CD8-positive, alpha-beta T cell (primary cell): ENCODE measurements at regions of chr19 and their contacts with region 1.

Region 1: GRCh38 chr19:12333162-12334159 is at the start of gene ZNF563:
- DNase-seq: peak; percentile 94 to 98 (median 97)
- ATAC-seq: peak; percentile 94
- H3K4me3 ChIP-seq: peak within 1 kb of the TSS; percentile 81 to 86
- H3K4me3 Mint-ChIP-seq: peak within 1 kb of the TSS; percentile 96
- H3K27ac ChIP-seq: peak within 1 kb of the TSS; percentile 81 to 83
- H3K27ac Mint-ChIP-seq: peak within 1 kb of the TSS; percentile 99
- H3K4me1 ChIP-seq: peaks cover 35% of the 10 kb centered on the region
- H3K4me1 Mint-ChIP-seq: peaks cover 41% of the 10 kb centered on the region
- H3K27me3 ChIP-seq: no peaks in the 10 kb centered on the region
- H3K27me3 Mint-ChIP-seq: no peaks in the 10 kb centered on the region
- CTCF ChIP-seq: no peak
- total RNA-seq, gene ZNF563: 2.2 to 2.5 TPM

Region 2: GRCh38 chr19:11090054-11090900 is 1243.2 kb before region 1 on chr19:
- CTCF ChIA-PET with region 1: no interaction called
- POLR2A ChIA-PET with region 1: no interaction called
- intact Hi-C with region 1: loop called in 1 of 2 experiments (anchors 5 kb)
- DNase-seq: peak; percentile 95 to 98 (median 98)
- ATAC-seq: peak; percentile 84
- H3K4me3 ChIP-seq: peak overlapping the region; percentile 78 to 93
- H3K4me3 Mint-ChIP-seq: peak overlapping the region; percentile 86
- H3K27ac ChIP-seq: peak overlapping the region; percentile 97 to 99
- H3K27ac Mint-ChIP-seq: peak overlapping the region; percentile 96
- H3K4me1 ChIP-seq: peaks cover 44% of the 10 kb centered on the region
- H3K4me1 Mint-ChIP-seq: peaks cover 47% of the 10 kb centered on the region
- H3K27me3 ChIP-seq: no peaks in the 10 kb centered on the region
- H3K27me3 Mint-ChIP-seq: no peaks in the 10 kb centered on the region
- CTCF ChIP-seq: no peak

Region 3: DNA sequence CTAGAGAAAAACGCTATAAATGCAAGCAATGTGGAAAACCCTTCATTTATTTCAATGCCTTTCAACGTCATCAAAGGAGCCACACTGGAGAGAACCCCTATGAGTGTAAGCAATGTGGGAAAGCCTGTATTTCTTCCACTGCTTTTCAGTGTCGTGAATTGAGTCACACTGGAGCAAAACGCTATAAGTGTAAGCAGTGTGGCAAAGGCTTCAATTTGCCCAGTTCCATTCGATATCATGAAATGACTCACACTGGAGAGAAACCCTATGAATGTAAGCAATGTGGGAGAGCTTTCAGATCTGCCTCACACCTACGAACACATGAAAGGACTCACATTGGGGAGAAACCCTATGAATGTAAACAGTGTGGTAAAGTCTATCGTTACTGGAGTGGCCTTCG is 220.8 kb before region 1 on chr19:
- CTCF ChIA-PET with region 1: no interaction called
- POLR2A ChIA-PET with region 1: no interaction called
- intact Hi-C with region 1: no loop called
- DNase-seq: no peak
- ATAC-seq: no peak
- H3K4me3 ChIP-seq: no peak overlapping the region
- H3K4me3 Mint-ChIP-seq: no peak overlapping the region
- H3K27ac ChIP-seq: no peak overlapping the region
- H3K27ac Mint-ChIP-seq: no peak overlapping the region
- H3K4me1 ChIP-seq: no peaks in the 10 kb centered on the region
- H3K4me1 Mint-ChIP-seq: no peaks in the 10 kb centered on the region
- H3K27me3 ChIP-seq: no peaks in the 10 kb centered on the region
- H3K27me3 Mint-ChIP-seq: no peaks in the 10 kb centered on the region
- CTCF ChIP-seq: no peak

Region 4: GRCh38 chr19:12202250-12202649 is 131.2 kb before region 1 on chr19:
- CTCF ChIA-PET with region 1: interaction called, 4 read pairs
- POLR2A ChIA-PET with region 1: interaction called, 3 read pairs
- intact Hi-C with region 1: loop called in 1 of 2 experiments (anchors 1 kb)
- DNase-seq: peak; percentile 28 to 77 (median 62)
- ATAC-seq: peak; percentile 83
- H3K4me3 ChIP-seq: no peak overlapping the region
- H3K4me3 Mint-ChIP-seq: no peak overlapping the region
- H3K27ac ChIP-seq: no peak overlapping the region
- H3K27ac Mint-ChIP-seq: no peak overlapping the region
- H3K4me1 ChIP-seq: peaks cover 8% of the 10 kb centered on the region
- H3K4me1 Mint-ChIP-seq: peaks cover 18% of the 10 kb centered on the region
- H3K27me3 ChIP-seq: no peaks in the 10 kb centered on the region
- H3K27me3 Mint-ChIP-seq: no peaks in the 10 kb centered on the region
- CTCF ChIP-seq: peak; percentile 36

Region 5: DNA sequence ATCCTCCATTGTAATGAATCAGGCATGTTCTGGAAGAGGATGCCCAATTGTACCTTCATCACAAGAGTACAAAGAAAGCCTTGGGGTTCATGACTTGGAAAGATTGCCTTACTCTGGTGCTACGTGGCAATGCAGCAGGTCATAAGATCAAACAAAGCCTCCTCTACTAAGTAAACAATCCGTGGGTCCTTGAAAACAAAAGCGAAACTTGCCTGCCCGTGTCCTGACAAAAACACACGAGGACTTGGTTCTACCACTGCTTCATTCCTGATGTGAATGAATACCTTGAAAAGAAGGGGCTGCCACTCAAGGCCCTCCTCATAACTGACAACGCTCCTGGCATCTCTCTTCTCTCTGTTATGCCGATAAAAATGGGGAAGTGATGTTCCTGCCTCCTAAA is 18.9 kb before region 1 on chr19:
- CTCF ChIA-PET with region 1: no interaction called
- POLR2A ChIA-PET with region 1: no interaction called
- intact Hi-C with region 1: no loop called
- DNase-seq: no peak
- ATAC-seq: no peak
- H3K4me3 ChIP-seq: no peak overlapping the region
- H3K4me3 Mint-ChIP-seq: no peak overlapping the region
- H3K27ac ChIP-seq: no peak overlapping the region
- H3K27ac Mint-ChIP-seq: no peak overlapping the region
- H3K4me1 ChIP-seq: no peaks in the 10 kb centered on the region
- H3K4me1 Mint-ChIP-seq: no peaks in the 10 kb centered on the region
- H3K27me3 ChIP-seq: no peaks in the 10 kb centered on the region
- H3K27me3 Mint-ChIP-seq: no peaks in the 10 kb centered on the region
- CTCF ChIP-seq: no peak

Region 6: DNA sequence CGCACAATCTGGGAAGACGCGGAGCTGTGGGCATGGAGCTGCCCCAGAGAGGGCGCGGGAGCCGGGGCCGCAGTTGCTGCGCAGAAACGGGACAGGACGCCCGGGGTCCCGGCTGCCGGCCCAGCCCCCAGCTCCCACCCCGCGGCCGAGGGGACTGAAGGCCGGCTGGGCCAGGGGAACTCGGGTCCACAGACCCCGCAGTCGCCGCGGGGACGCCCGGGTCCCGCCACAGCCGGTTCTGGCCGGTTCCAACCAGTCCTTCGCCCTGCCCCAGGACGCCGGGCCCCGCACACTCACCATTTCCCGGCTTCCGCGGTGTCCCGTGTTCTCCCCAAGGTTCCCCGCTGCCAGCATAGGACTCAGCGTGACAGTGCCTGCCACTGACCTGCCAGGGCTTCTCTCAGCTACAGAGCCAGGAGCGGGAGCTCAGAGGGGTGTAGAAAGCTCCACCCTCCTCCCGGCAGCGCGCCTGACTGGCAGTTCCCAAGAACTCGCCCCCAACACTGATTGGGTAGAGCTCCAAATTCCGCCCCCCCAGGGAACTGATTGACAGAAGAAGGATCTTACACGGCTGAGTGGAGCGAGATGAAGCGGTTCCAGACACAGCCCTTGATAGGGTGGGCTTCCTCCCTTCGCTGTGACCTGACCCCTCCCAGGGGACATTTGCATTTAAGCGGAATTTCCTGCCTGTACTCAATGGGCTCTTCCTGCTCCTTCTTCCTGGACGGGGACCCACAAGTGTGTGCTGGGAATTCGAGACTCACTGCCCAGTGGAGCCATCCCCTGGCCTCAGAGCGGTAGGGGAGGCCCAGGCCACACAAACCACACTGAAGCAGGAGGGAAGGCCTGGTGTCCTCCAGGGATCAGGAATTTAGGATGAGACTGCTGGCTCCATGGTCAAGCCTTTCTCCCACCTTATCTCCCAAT is 32.0 kb after region 1 on chr19 and contains the start of gene ZNF442:
- CTCF ChIA-PET with region 1: interaction called, 4 read pairs
- POLR2A ChIA-PET with region 1: interaction called, 21 read pairs
- intact Hi-C with region 1: loop called (anchors 1 kb)
- DNase-seq: peak; percentile 54 to 91 (median 85)
- ATAC-seq: peak; percentile 98
- H3K4me3 ChIP-seq: peak within 1 kb of the TSS; percentile 64 to 65
- H3K4me3 Mint-ChIP-seq: peak within 1 kb of the TSS; percentile 97
- H3K27ac ChIP-seq: peak within 1 kb of the TSS in 1 of 2 experiments; percentile 34
- H3K27ac Mint-ChIP-seq: peak within 1 kb of the TSS; percentile 84
- H3K4me1 ChIP-seq: peaks cover 13% of the 10 kb centered on the region
- H3K4me1 Mint-ChIP-seq: peaks cover 24% of the 10 kb centered on the region
- H3K27me3 ChIP-seq: peaks cover 0 to 2% of the 10 kb centered on the region in 2 experiments
- H3K27me3 Mint-ChIP-seq: no peaks in the 10 kb centered on the region
- CTCF ChIP-seq: no peak
- total RNA-seq, gene ZNF442: 1.00 to 1.0 TPM

Region 7: GRCh38 chr19:12440541-12441316 is 107.3 kb after region 1 on chr19 and contains the start of gene ZNF443:
- CTCF ChIA-PET with region 1: no interaction called
- POLR2A ChIA-PET with region 1: interaction called, 6 read pairs
- intact Hi-C with region 1: loop called in 1 of 2 experiments (anchors 2 kb)
- DNase-seq: peak; percentile 97 to 99 (median 98)
- ATAC-seq: peak; percentile 97
- H3K4me3 ChIP-seq: peak within 1 kb of the TSS; percentile 55 to 87
- H3K4me3 Mint-ChIP-seq: peak within 1 kb of the TSS; percentile 100
- H3K27ac ChIP-seq: peak within 1 kb of the TSS; percentile 26 to 46
- H3K27ac Mint-ChIP-seq: peak within 1 kb of the TSS; percentile 92
- H3K4me1 ChIP-seq: no peaks in the 10 kb centered on the region
- H3K4me1 Mint-ChIP-seq: peaks cover 19% of the 10 kb centered on the region
- H3K27me3 ChIP-seq: no peaks in the 10 kb centered on the region
- H3K27me3 Mint-ChIP-seq: no peaks in the 10 kb centered on the region
- CTCF ChIP-seq: no peak
- total RNA-seq, gene ZNF443: 2.1 to 2.6 TPM

Region 8: GRCh38 chr19:12495002-12495802 is 161.7 kb after region 1 on chr19:
- CTCF ChIA-PET with region 1: interaction called, 3 read pairs
- POLR2A ChIA-PET with region 1: interaction called, 12 read pairs
- intact Hi-C with region 1: loop called in 1 of 2 experiments (anchors 5 kb)
- DNase-seq: peak; percentile 81 to 96 (median 93)
- ATAC-seq: peak; percentile 99
- H3K4me3 ChIP-seq: peak overlapping the region; percentile 53 to 64
- H3K4me3 Mint-ChIP-seq: peak overlapping the region; percentile 91
- H3K27ac ChIP-seq: peak overlapping the region; percentile 68 to 79
- H3K27ac Mint-ChIP-seq: peak overlapping the region; percentile 94
- H3K4me1 ChIP-seq: peaks cover 8% of the 10 kb centered on the region
- H3K4me1 Mint-ChIP-seq: peaks cover 18% of the 10 kb centered on the region
- H3K27me3 ChIP-seq: no peaks in the 10 kb centered on the region
- H3K27me3 Mint-ChIP-seq: no peaks in the 10 kb centered on the region
- CTCF ChIP-seq: peak; percentile 55